ENCODE measurements at regions of chr14 and their contacts with region 1.

Region 1: GRCh38 chr14:69673578-69674305 is 62.3 kb downstream of the SUSD6 start:
- DNase-seq: peak; percentile 52
- H3K4me3 ChIP-seq: peak overlapping the region; percentile 8
- H3K27ac ChIP-seq: peak overlapping the region; percentile 72
- H3K4me1 ChIP-seq: peaks cover 73% of the 10 kb centered on the region
- CTCF ChIP-seq: peak; percentile 38

Region 2: GRCh38 chr14:69693145-69693544 is 19.4 kb after region 1 on chr14:
- CTCF ChIA-PET with region 1: no interaction called
- POLR2A ChIA-PET with region 1: interaction called, 5 read pairs
- intact Hi-C with region 1: loop called (anchors 2 kb)
- DNase-seq: peak; percentile 89
- H3K4me3 ChIP-seq: peak overlapping the region; percentile 41
- H3K27ac ChIP-seq: peak overlapping the region; percentile 84
- H3K4me1 ChIP-seq: peaks cover 74% of the 10 kb centered on the region
- CTCF ChIP-seq: no peak

Region 3: DNA sequence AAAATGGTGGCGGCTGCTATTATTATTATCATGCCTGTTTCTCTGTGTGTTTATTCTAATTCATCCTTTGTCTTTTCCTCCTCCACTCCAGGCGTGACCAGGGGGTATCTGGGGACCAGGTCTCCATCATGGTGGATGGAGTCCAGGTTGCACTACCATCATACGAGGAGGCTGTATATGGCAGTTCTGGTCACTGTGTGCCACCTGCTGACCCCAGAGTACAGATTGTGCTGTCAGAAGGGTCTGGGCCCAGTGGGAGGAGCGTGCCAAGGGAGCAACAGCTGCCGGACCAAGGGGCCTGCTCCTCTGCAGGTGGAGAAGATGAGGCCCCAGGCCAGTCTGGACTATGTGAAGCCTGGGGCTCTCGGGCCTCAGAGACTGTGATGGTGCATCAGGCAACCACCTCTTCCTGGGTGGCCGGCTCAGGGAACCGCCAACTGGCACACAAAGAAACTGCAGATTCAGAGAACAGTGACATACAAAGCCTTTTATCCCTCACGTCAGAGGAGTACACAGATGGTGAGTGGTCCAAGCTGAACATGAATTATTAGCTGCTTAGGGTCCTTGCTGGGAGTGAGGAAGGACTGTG is 34.9 kb after region 1 on chr14:
- CTCF ChIA-PET with region 1: no interaction called
- POLR2A ChIA-PET with region 1: no interaction called
- intact Hi-C with region 1: loop called (anchors 5 kb)
- DNase-seq: peak; percentile 71
- H3K4me3 ChIP-seq: no peak overlapping the region
- H3K27ac ChIP-seq: peak overlapping the region; percentile 15
- H3K4me1 ChIP-seq: peaks cover 51% of the 10 kb centered on the region
- CTCF ChIP-seq: peak; percentile 76